ENCODE measurements at regions of chr6 and their contacts with region 1.

Region 1: GRCh38 chr6:90251295-90251992 is 45.2 kb downstream of the BACH2 start:
- DNase-seq: no peak
- H3K4me3 Mint-ChIP-seq: peak overlapping the region; percentile 8
- H3K27ac Mint-ChIP-seq: peak overlapping the region; percentile 98
- H3K4me1 Mint-ChIP-seq: peaks cover 90% of the 10 kb centered on the region
- H3K27me3 Mint-ChIP-seq: no peaks in the 10 kb centered on the region

Region 2: DNA sequence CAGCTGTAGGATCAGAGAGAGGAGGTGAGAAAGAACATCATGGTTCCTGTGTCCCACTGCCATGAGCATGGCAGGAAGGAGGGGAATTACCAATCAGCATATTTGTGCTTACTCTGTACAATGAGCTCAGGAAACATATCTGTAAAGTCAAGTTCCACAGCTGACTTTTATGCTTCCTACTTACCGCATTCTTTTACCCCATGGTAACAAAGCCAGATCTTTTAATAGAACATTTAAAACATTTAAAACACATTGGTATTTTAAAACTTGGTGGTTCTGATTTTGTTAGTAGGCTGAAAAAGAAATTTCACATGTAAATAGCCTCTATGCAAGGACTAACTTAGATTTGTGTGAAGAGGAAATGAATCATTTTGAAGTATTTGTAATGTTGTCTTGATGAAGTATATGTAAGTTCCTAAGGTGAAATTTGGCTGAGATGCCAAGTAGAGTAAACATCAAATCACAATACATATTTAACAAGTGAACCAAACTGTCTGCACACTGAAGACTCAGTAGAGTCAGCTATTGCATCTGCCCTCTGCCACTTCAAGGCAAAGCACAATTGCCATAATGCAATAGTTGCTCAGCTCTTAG is 242.4 kb before region 1 on chr6:
- CTCF ChIA-PET with region 1: no interaction called
- intact Hi-C with region 1: loop called (anchors 1 kb)
- DNase-seq: peak; percentile 66
- H3K4me3 Mint-ChIP-seq: no peak overlapping the region
- H3K27ac Mint-ChIP-seq: peak overlapping the region; percentile 91
- H3K4me1 Mint-ChIP-seq: peaks cover 58% of the 10 kb centered on the region
- H3K27me3 Mint-ChIP-seq: no peaks in the 10 kb centered on the region

Region 3: DNA sequence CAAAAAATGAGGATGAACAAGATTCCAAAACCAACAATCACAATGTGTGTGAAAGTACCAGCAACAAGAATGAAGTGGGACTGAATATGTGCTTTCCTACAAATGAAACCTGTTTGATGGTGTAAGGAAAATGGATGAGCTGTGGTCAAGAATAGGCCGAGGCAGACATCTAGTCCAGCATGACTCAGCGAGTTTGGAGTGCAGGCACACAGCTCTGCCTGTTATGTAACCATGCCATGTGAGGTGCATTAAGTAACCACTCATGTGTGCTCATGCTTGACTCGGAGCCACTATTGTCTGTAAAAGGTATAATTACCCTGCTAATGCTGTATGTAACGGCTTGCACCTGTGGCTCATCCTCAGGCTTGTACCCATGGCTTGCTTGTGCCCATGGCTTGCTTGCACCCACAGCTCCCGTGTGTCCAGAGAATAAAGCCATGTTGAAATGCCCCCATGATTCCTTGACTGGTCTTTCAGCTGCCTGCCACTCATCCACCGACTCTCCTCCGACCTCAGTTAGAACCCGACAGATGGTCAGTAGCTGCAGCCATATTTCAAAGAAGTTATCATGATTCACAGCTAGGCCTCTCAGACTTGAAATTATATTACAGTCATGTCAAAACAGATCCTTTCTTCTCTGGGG is 53.5 kb before region 1 on chr6:
- CTCF ChIA-PET with region 1: interaction called, 3 read pairs
- intact Hi-C with region 1: loop called (anchors 1 kb)
- DNase-seq: peak; percentile 47
- H3K4me3 Mint-ChIP-seq: no peak overlapping the region
- H3K27ac Mint-ChIP-seq: peak overlapping the region; percentile 80
- H3K4me1 Mint-ChIP-seq: peaks cover 92% of the 10 kb centered on the region
- H3K27me3 Mint-ChIP-seq: no peaks in the 10 kb centered on the region

Region 4: DNA sequence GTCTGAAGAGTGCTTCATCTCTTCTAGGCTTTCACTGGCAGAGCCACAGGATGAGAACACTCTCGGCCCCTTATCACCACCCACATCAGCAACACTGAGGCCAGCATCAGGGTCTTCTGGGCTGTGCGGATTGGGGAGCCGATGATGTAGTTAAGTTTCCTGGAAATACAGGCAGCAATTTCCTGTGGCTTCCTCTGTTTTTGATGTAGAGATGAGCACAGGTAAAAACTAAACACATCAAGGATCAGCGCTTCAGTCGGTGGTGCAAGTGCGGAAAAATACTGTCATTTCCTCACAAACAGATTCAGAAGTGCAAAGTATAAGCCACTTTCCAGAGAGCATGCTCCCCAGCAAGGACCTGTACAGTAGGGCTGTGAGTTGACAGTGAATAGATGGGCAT is 17.4 kb before region 1 on chr6:
- CTCF ChIA-PET with region 1: interaction called, 4 read pairs
- intact Hi-C with region 1: loop called (anchors 1 kb)
- DNase-seq: peak; percentile 77
- H3K4me3 Mint-ChIP-seq: peak overlapping the region; percentile 60
- H3K27ac Mint-ChIP-seq: peak overlapping the region; percentile 95
- H3K4me1 Mint-ChIP-seq: peaks cover 94% of the 10 kb centered on the region
- H3K27me3 Mint-ChIP-seq: no peaks in the 10 kb centered on the region

Region 5: GRCh38 chr6:90319044-90319443 is 67.6 kb after region 1 on chr6:
- CTCF ChIA-PET with region 1: no interaction called
- intact Hi-C with region 1: loop called (anchors 1 kb)
- DNase-seq: peak; percentile 55
- H3K4me3 Mint-ChIP-seq: no peak overlapping the region
- H3K27ac Mint-ChIP-seq: peak overlapping the region; percentile 55
- H3K4me1 Mint-ChIP-seq: peaks cover 40% of the 10 kb centered on the region
- H3K27me3 Mint-ChIP-seq: no peaks in the 10 kb centered on the region

Region 6: GRCh38 chr6:90466154-90466940 is 214.9 kb after region 1 on chr6:
- CTCF ChIA-PET with region 1: no interaction called
- intact Hi-C with region 1: loop called (anchors 2 kb)
- DNase-seq: peak; percentile 73
- H3K4me3 Mint-ChIP-seq: no peak overlapping the region
- H3K27ac Mint-ChIP-seq: peak overlapping the region; percentile 90
- H3K4me1 Mint-ChIP-seq: peaks cover 82% of the 10 kb centered on the region
- H3K27me3 Mint-ChIP-seq: no peaks in the 10 kb centered on the region

Region 7: DNA sequence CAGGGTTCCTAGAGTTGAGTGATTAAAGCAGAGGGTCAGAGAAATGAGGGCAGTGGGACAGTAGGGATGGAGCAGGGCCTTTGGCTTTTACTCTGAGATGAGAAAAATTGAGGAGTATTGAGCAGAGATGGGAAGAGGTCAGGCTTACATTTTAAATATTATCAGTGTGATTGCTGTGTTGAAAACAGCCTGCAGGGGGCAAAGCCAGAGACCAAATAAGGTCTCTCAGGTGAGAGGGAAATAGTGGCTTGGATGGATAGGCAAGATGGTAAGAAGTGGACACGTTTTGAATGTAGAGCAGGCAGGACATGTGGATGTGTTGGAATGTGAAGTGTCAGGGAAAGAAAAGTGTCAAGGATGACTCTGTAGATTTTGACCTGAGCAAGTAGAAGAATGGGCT is 440.4 kb after region 1 on chr6:
- CTCF ChIA-PET with region 1: no interaction called
- intact Hi-C with region 1: no loop called
- DNase-seq: no peak
- H3K4me3 Mint-ChIP-seq: no peak overlapping the region
- H3K27ac Mint-ChIP-seq: no peak overlapping the region
- H3K4me1 Mint-ChIP-seq: no peaks in the 10 kb centered on the region
- H3K27me3 Mint-ChIP-seq: peaks cover 14% of the 10 kb centered on the region

Measured in activated naive CD4-positive, alpha-beta T cell treated with anti-CD3 and anti-CD28 coated beads for 36 hours (primary cell).